ENCODE measurements at regions of chr2 and their contacts with region 1.

Region 1: DNA sequence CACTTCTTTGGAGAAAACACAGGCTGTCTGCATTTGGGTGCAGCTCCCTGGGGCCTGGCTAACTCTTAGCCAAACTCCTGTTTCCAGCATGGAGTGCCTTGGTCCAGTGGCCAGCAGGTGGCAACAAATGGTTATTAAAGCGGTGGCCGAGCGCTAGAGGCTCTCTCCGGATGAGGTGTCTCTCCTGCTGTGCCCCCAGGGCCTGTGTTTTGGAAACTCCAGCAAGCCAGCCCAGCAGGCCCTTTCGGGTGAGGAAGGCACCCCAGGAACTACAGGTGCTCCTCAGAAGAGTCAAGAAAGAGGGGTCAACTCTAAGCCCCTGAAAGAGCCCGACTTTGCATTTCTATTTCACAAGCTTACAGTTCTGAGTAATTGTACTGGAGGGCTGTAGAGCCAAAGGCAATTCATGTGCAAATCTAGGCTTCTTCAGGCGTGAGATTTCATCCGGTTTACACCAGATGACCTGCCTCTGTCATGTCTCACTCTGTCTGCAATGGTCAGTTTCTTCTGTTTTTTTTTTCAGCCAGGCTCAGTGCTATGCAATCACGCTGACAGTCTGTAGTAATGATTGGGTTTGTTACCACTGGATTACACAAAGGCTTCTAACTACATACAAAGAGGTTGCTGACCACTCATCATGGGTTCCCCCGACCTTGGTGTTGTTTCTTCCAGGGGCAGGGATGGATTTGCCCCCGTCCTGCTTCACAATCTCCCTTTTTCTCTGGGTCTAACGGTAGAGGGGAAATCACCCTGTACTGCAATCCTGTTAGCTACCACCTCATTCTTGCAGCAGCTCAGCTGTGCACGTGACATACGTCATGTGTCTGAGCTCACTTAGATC is 7.6 kb upstream of the CHRNA1 start:
- DNase-seq: peak; percentile 95
- H3K4me3 ChIP-seq: no peak overlapping the region
- H3K27ac ChIP-seq: peak overlapping the region; percentile 16 to 62 (median 55)
- H3K4me1 ChIP-seq: peaks cover 7 to 32% (median 25%) of the 10 kb centered on the region in 4 donors
- H3K27me3 ChIP-seq: no peaks in the 10 kb centered on the region
- CTCF ChIP-seq: peak; percentile 83 to 90 (median 87)
- EP300 ChIP-seq: no peak
- POLR2A ChIP-seq: no peak

Region 2: GRCh38 chr2:174697255-174697654 is 74.6 kb before region 1 on chr2:
- intact Hi-C with region 1: no loop called
- DNase-seq: no peak
- H3K4me3 ChIP-seq: no peak overlapping the region
- H3K27ac ChIP-seq: no peak overlapping the region
- H3K4me1 ChIP-seq: peaks cover 0 to 5% (median 2%) of the 10 kb centered on the region in 4 donors
- H3K27me3 ChIP-seq: peaks cover 0 to 6% (median 0%) of the 10 kb centered on the region in 4 donors
- CTCF ChIP-seq: peak; percentile 59 to 84 (median 63)
- EP300 ChIP-seq: no peak
- POLR2A ChIP-seq: no peak

Region 3: DNA sequence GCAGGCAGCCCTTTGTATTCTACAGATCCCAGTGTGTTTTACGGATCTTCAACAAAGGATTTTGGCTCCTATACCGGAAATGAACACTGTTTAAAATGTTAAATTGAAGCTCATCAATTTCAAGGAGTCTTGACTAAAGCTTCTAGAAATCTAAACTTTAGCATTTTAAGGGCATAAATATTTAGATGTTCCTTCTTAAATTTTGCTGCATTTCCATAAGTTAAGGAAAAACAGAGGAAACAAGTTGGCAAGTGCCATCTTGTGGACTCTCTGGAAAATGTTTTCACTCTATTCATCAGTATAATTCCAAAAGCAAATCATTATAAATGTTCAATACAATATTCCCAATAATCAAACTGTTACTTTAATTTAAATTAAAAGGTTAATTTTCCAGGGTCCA is 213.8 kb after region 1 on chr2:
- intact Hi-C with region 1: loop called (anchors 2 kb)
- DNase-seq: no peak
- H3K4me3 ChIP-seq: peak overlapping the region in 1 of 4 donors; percentile 17
- H3K27ac ChIP-seq: no peak overlapping the region
- H3K4me1 ChIP-seq: peaks cover 0 to 12% (median 5%) of the 10 kb centered on the region in 4 donors
- H3K27me3 ChIP-seq: no peaks in the 10 kb centered on the region
- CTCF ChIP-seq: peak; percentile 50 to 56 (median 56)
- EP300 ChIP-seq: no peak
- POLR2A ChIP-seq: no peak

Measured in esophagus muscularis mucosa (tissue), 4 donors.